H1 (cell line): ENCODE measurements at regions of chr3 and their contacts with region 1.

Region 1: GRCh38 chr3:53891497-53892285 is at the start of gene SELENOK:
- DNase-seq: peak; percentile 92 to 97
- H3K4me3 ChIP-seq: peak within 1 kb of the TSS; percentile 80 to 94 (median 90)
- H3K27ac ChIP-seq: peak within 1 kb of the TSS; percentile 85
- H3K4me1 ChIP-seq: peaks cover 0 to 4% (median 2%) of the 10 kb centered on the region in 4 experiments; a peak in 3 of 7 replicates
- H3K27me3 ChIP-seq: peaks cover 0 to 8% (median 1%) of the 10 kb centered on the region in 4 experiments; a peak in 2 of 7 replicates
- CTCF ChIP-seq: no peak
- EP300 ChIP-seq: no peak; a peak in 1 of 3 replicates
- POLR2A ChIP-seq: peak; percentile 63 to 97
- RAD21 ChIP-seq: no peak
- total RNA-seq, gene SELENOK: 32.5 and 40.2 TPM in 2 replicates

Region 2: GRCh38 chr3:53789408-53789807 is 102.3 kb before region 1 on chr3:
- CTCF ChIA-PET with region 1: no interaction called
- POLR2A ChIA-PET with region 1: no interaction called
- DNase-seq: no peak
- H3K4me3 ChIP-seq: no peak overlapping the region
- H3K27ac ChIP-seq: no peak overlapping the region
- H3K4me1 ChIP-seq: peaks cover 0 to 6% (median 3%) of the 10 kb centered on the region in 4 experiments; a peak in 3 of 7 replicates
- H3K27me3 ChIP-seq: no peaks in the 10 kb centered on the region
- CTCF ChIP-seq: no peak
- EP300 ChIP-seq: no peak
- POLR2A ChIP-seq: no peak
- RAD21 ChIP-seq: no peak

Region 3: GRCh38 chr3:53865732-53866499 is 25.8 kb before region 1 on chr3:
- CTCF ChIA-PET with region 1: no interaction called
- POLR2A ChIA-PET with region 1: no interaction called
- DNase-seq: no peak
- H3K4me3 ChIP-seq: no peak overlapping the region
- H3K27ac ChIP-seq: no peak overlapping the region
- H3K4me1 ChIP-seq: no peaks in the 10 kb centered on the region
- H3K27me3 ChIP-seq: no peaks in the 10 kb centered on the region
- CTCF ChIP-seq: no peak
- EP300 ChIP-seq: no peak
- POLR2A ChIP-seq: no peak
- RAD21 ChIP-seq: no peak

Region 4: GRCh38 chr3:53880396-53881345 is 11.0 kb before region 1 on chr3:
- CTCF ChIA-PET with region 1: interaction called, 5 read pairs
- POLR2A ChIA-PET with region 1: interaction called, 11 read pairs
- DNase-seq: no peak
- H3K4me3 ChIP-seq: peak overlapping the region; percentile 73 to 94 (median 90)
- H3K27ac ChIP-seq: no peak overlapping the region
- H3K4me1 ChIP-seq: peaks cover 3 to 7% (median 4%) of the 10 kb centered on the region in 4 experiments; a peak in 5 of 7 replicates
- H3K27me3 ChIP-seq: no peaks in the 10 kb centered on the region
- CTCF ChIP-seq: no peak
- EP300 ChIP-seq: no peak
- POLR2A ChIP-seq: 0 out of 3 replicates have a peak, but pooled peaks of 1 of the 2 experiments have one; percentile 28
- RAD21 ChIP-seq: no peak